Activated B cell treated with CpG ODN at 0.5 μM for 24 hours (primary cell): ENCODE measurements at regions of chr2 and their contacts with region 1.

Region 1: DNA sequence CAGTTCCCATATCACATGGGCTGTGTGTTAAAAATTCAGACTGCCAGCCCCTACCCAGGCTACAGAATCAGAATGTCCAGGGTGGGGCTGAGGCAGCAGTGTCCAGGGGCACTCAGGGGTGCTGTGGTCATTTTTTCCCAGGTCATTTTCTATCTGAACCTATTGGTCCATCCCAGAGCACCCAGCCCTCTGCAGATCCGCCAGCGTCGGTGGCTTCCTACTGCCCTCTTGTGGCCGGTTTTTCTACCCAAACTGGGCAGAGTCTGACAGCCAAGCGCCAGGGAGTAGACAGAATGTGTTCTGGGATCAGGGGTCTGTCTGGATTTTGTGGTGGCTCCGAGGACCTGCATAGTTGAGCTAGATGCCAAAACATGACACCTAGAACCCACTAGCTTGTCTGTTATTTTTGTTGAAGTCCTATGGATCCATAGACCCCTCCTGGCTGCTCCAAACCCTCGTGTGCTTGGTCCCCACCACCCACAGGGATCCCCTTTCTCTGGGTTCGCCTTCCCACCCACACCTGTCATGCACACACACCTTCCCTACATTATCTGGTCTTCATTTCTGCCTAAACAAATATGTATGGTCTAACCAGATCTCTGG is 34.1 kb upstream of the RMDN2 start:
- DNase-seq: peak; percentile 46
- ATAC-seq: peak; percentile 59
- H3K4me3 Mint-ChIP-seq: no peak overlapping the region
- H3K27ac Mint-ChIP-seq: no peak overlapping the region
- H3K4me1 Mint-ChIP-seq: peaks cover 39% of the 10 kb centered on the region
- H3K27me3 Mint-ChIP-seq: no peaks in the 10 kb centered on the region
- CTCF ChIP-seq: no peak

Region 2: DNA sequence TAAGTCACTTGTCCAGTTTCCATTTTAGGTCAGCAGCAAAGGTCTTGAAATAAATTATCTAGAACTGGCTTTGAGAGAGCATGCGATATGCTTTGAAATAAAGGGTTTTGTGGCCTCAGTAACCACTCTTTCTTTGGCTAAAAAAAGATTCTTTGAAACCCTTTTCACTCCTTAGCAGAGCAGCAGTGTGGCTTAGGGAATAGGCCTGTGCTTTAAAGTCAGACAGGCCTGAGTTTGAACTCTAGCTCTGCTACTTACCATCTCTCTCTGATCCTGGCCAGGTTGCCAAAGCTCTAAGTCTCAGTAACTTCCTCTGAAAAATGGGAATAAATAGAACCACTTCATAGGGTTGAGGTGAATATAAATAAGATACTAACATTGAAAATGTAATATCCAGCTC is 493.8 kb before region 1 on chr2:
- CTCF ChIA-PET with region 1: interaction called, 4 read pairs
- POLR2A ChIA-PET with region 1: interaction called, 4 read pairs
- intact Hi-C with region 1: loop called (anchors 2 kb)
- DNase-seq: no peak
- ATAC-seq: no peak
- H3K4me3 Mint-ChIP-seq: no peak overlapping the region
- H3K27ac Mint-ChIP-seq: no peak overlapping the region
- H3K4me1 Mint-ChIP-seq: peaks cover 4% of the 10 kb centered on the region
- H3K27me3 Mint-ChIP-seq: no peaks in the 10 kb centered on the region
- CTCF ChIP-seq: no peak

Region 3: GRCh38 chr2:37934591-37935513 is 43.9 kb after region 1 on chr2:
- CTCF ChIA-PET with region 1: no interaction called
- POLR2A ChIA-PET with region 1: interaction called, 3 read pairs
- intact Hi-C with region 1: loop called (anchors 2 kb)
- DNase-seq: no peak
- ATAC-seq: peak; percentile 81
- H3K4me3 Mint-ChIP-seq: peak overlapping the region; percentile 74
- H3K27ac Mint-ChIP-seq: peak overlapping the region; percentile 87
- H3K4me1 Mint-ChIP-seq: peaks cover 77% of the 10 kb centered on the region
- H3K27me3 Mint-ChIP-seq: no peaks in the 10 kb centered on the region
- CTCF ChIP-seq: no peak

Region 4: GRCh38 chr2:38037757-38038621 is 147.0 kb after region 1 on chr2:
- CTCF ChIA-PET with region 1: no interaction called
- POLR2A ChIA-PET with region 1: no interaction called
- intact Hi-C with region 1: loop called (anchors 2 kb)
- DNase-seq: peak; percentile 19
- ATAC-seq: peak; percentile 88
- H3K4me3 Mint-ChIP-seq: peak overlapping the region; percentile 78
- H3K27ac Mint-ChIP-seq: peak overlapping the region; percentile 78
- H3K4me1 Mint-ChIP-seq: peaks cover 15% of the 10 kb centered on the region
- H3K27me3 Mint-ChIP-seq: peaks cover 30% of the 10 kb centered on the region
- CTCF ChIP-seq: no peak

Region 5: GRCh38 chr2:38274286-38275276 is 383.6 kb after region 1 on chr2:
- CTCF ChIA-PET with region 1: interaction called, 3 read pairs
- POLR2A ChIA-PET with region 1: no interaction called
- intact Hi-C with region 1: loop called (anchors 1 kb)
- DNase-seq: no peak
- ATAC-seq: peak; percentile 56
- H3K4me3 Mint-ChIP-seq: no peak overlapping the region
- H3K27ac Mint-ChIP-seq: no peak overlapping the region
- H3K4me1 Mint-ChIP-seq: peaks cover 3% of the 10 kb centered on the region
- H3K27me3 Mint-ChIP-seq: no peaks in the 10 kb centered on the region
- CTCF ChIP-seq: no peak